ENCODE measurements at regions of chr11 and their contacts with region 1.

Region 1: GRCh38 chr11:9534791-9535781 is 38.4 kb upstream of the WEE1 start:
- DNase-seq: peak; percentile 72 to 83
- ATAC-seq: peak in 7 of 8 donors; percentile 52 to 91 (median 74)
- H3K4me3 ChIP-seq: no peak overlapping the region
- H3K27ac ChIP-seq: no peak overlapping the region
- H3K4me1 ChIP-seq: peaks cover 0 to 13% (median under 1%) of the 10 kb centered on the region in 9 donors
- H3K27me3 ChIP-seq: no peaks in the 10 kb centered on the region
- CTCF ChIP-seq: peak; percentile 56 to 83 (median 75)

Region 2: GRCh38 chr11:9573052-9573774 is 38.1 kb after region 1 on chr11 and contains the start of gene WEE1:
- intact Hi-C with region 1: loop called in 2 of 10 experiments (anchors 2 to 5 kb)
- DNase-seq: peak; percentile 98 to 99
- ATAC-seq: peak; percentile 94 to 98 (median 96)
- H3K4me3 ChIP-seq: peak within 1 kb of the TSS; percentile 54 to 95 (median 82)
- H3K27ac ChIP-seq: peak within 1 kb of the TSS; percentile 86 to 98 (median 96)
- H3K4me1 ChIP-seq: peaks cover 3 to 57% (median 35%) of the 10 kb centered on the region in 9 donors
- H3K27me3 ChIP-seq: no peaks in the 10 kb centered on the region
- CTCF ChIP-seq: no peak
- total RNA-seq, gene WEE1: 22.9 to 114 (median 59.0) TPM

Region 3: DNA sequence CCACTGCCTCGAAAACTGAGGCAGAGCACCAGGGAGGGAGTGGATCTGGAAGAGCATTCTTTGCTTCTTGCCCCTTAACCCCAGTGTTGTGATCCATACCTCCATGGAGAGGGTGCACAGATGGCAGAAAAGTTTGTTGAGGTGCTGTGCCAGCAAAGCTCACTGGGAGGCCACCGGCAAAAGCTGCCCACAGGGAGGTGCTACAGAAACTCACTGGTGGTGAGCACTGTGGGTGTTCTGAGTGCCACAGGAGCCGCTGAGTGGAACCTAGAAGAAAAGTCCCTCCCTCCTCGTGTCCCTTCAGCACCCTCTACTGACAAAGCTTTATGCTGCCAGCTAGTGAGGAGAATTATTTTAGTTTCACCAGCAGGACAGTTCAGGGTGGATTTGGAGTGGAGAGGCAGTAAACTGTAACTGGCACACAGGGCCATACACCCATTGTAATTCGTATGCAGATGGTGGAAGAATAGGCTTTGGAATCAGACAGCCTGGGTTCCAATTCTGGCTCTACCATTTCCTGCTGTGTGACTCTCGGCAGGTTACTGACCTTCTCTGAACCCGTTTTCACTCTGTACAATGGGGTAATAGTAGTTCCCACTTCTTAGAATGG is 213.4 kb after region 1 on chr11:
- intact Hi-C with region 1: loop called in 5 of 10 experiments (anchors 2 to 10 kb)
- DNase-seq: peak in 1 of 2 donors; percentile 63
- ATAC-seq: peak; percentile 64 to 88 (median 86)
- H3K4me3 ChIP-seq: no peak overlapping the region
- H3K27ac ChIP-seq: peak overlapping the region in 4 of 10 donors; percentile 17 to 51 (median 36)
- H3K4me1 ChIP-seq: peaks cover 0 to 25% (median 16%) of the 10 kb centered on the region in 9 donors
- H3K27me3 ChIP-seq: no peaks in the 10 kb centered on the region
- CTCF ChIP-seq: peak; percentile 53 to 79 (median 69)

Region 4: GRCh38 chr11:9972989-9973388 is 437.9 kb after region 1 on chr11:
- intact Hi-C with region 1: loop called in 1 of 10 experiments (anchors 10 kb)
- DNase-seq: peak in 1 of 2 donors; percentile 9
- ATAC-seq: peak; percentile 47 to 82 (median 71)
- H3K4me3 ChIP-seq: no peak overlapping the region
- H3K27ac ChIP-seq: no peak overlapping the region
- H3K4me1 ChIP-seq: peaks cover 0 to 22% (median 16%) of the 10 kb centered on the region in 9 donors
- H3K27me3 ChIP-seq: no peaks in the 10 kb centered on the region
- CTCF ChIP-seq: peak; percentile 40 to 82 (median 72)